A549 (cell line): ENCODE measurements at regions of chr2 and their contacts with region 1.

Region 1: GRCh38 chr2:218898109-218898878 is 17.6 kb downstream of the WNT10A start:
- DNase-seq: peak; percentile 54 to 71
- ATAC-seq: peak; percentile 67 to 86
- H3K4me3 ChIP-seq: peak overlapping the region; percentile 34
- H3K27ac ChIP-seq: peak overlapping the region in 1 of 2 experiments; percentile 52; a peak in 1 of 6 replicates
- H3K4me1 ChIP-seq: peaks cover 32% of the 10 kb centered on the region
- CTCF ChIP-seq: peak; percentile 92
- EP300 ChIP-seq: no peak
- POLR2A ChIP-seq: no peak
- RAD21 ChIP-seq: peak; percentile 79 to 86

Region 2: DNA sequence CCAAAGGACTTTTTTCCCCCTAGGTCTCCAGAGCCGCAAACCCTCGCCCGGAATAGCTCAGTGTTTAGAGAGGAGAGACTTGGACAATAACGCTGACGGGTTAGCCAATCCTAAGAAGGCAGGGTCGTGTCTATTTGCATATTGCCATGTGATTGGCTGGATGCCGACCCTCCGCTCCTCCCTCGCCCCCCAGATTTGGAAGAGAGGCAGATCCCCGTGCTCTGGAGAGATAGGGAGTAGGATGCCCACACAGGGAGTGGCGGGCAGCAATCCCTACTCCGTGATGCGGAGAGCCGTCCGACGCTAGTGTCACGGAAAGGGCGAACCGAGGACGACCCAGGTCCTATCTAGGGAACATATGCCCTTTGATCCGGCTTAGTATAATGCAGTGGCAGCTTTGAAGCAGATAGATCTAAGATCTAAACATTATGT is 37.3 kb before region 1 on chr2:
- CTCF ChIA-PET with region 1: interaction called, 14 read pairs
- POLR2A ChIA-PET with region 1: no interaction called
- DNase-seq: no peak
- ATAC-seq: peak in 1 of 2 experiments; percentile 13; a peak in 1 of 6 replicates
- H3K4me3 ChIP-seq: peak overlapping the region; percentile 64; the same call in 1 of the 3 replicates
- H3K27ac ChIP-seq: no peak overlapping the region
- H3K4me1 ChIP-seq: peaks cover 35% of the 10 kb centered on the region
- CTCF ChIP-seq: no peak
- EP300 ChIP-seq: no peak
- POLR2A ChIP-seq: no peak
- RAD21 ChIP-seq: no peak

Region 3: DNA sequence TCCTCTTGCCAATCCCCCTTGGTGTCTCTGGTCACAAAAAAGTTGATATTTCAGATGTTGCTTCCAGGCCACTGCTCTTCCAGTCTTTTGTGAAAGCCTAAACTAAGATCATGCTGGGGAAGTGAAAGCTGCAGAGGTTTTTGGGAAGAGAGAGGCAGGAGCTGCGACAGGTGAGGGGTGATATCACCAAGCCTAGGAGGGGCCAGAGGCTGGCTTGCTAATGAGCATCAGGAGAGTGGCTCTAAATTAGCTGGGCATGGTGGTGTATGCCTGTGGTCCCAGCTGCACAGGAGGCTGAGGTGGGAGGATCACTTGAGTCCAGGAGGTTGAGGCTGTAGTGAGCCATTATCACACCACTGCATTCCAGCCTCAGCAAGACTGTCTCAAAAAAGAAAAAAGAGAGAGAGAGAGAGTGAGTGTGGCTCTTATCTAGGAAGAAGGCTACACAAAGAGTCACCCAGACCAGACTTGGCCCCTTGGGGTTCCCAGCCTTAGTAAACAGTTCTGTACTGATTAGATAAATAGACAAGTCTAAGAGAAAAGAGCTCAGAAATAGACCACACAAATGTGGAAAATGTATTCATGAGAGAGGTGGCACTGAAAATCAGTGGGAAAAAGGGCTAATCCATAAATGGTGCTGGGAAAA is 46.6 kb after region 1 on chr2:
- CTCF ChIA-PET with region 1: interaction called, 13 read pairs
- POLR2A ChIA-PET with region 1: no interaction called
- DNase-seq: no peak
- ATAC-seq: no peak
- H3K4me3 ChIP-seq: no peak overlapping the region
- H3K27ac ChIP-seq: no peak overlapping the region
- H3K4me1 ChIP-seq: no peaks in the 10 kb centered on the region
- CTCF ChIP-seq: no peak
- EP300 ChIP-seq: no peak
- POLR2A ChIP-seq: no peak
- RAD21 ChIP-seq: no peak

Region 4: DNA sequence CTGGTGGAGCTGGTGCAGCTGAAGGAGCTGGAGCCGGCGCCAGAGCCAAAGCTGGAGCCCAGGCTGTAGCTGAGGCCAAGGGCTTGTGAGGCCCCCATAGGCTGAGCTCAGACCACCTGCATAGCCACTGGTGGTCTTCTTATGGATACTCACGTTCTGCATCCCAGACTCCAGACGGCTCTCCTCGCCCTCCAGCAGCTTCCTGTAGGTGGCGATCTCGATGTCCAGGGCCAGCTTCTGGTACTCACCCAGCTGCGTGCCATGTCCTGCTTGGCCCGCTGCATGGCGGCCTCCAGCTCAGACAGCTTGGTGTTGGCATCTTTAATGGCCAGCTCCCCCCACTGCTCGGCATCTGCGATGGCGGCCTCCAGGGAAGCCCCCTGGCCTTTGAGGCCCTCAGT is 55.2 kb after region 1 on chr2:
- CTCF ChIA-PET with region 1: interaction called, 25 read pairs
- POLR2A ChIA-PET with region 1: no interaction called
- DNase-seq: no peak
- ATAC-seq: peak in 1 of 2 experiments; percentile 68; a peak in 3 of 6 replicates
- H3K4me3 ChIP-seq: no peak overlapping the region
- H3K27ac ChIP-seq: no peak overlapping the region
- H3K4me1 ChIP-seq: no peaks in the 10 kb centered on the region
- CTCF ChIP-seq: no peak
- EP300 ChIP-seq: no peak
- POLR2A ChIP-seq: no peak
- RAD21 ChIP-seq: 0 out of 5 replicates have a peak, but pooled peaks of 1 of the 2 experiments have one; percentile 7

Region 5: DNA sequence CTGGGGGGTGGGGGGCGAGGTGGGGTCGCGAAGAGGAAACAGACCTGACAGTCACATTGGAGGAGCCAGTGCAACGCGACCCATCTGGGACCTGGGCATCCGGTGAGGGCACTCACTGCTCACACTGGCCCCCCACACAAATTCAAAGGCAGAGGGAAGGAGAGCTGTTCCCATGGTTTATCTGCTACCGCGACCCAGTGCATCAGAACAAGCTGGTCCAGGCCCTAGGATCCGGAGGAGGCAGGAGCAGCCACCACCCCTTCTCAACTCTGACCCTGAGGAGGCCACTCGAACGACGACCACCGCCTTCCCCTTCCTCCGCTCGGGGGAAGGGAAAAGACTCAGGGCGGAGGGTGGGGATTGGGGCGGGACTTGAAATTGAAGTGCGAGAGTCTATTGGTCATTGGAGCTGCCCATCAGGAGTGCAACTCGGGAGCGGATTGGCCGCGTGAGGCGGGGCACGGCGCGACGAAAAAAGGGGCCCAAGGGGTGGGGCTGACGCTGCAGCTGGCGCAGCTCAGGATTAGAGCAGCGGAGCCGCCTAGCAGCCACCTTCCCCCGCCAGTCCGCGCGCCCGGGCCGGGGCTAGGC is 60.9 kb after region 1 on chr2 and contains the start of gene CDK5R2:
- CTCF ChIA-PET with region 1: interaction called, 25 read pairs
- POLR2A ChIA-PET with region 1: no interaction called
- DNase-seq: peak; percentile 88 to 97
- ATAC-seq: peak; percentile 70 to 86
- H3K4me3 ChIP-seq: peak within 1 kb of the TSS; percentile 64
- H3K27ac ChIP-seq: peak within 1 kb of the TSS; percentile 73 to 74
- H3K4me1 ChIP-seq: peaks cover 35% of the 10 kb centered on the region
- CTCF ChIP-seq: no peak
- EP300 ChIP-seq: no peak
- POLR2A ChIP-seq: 0 out of 2 replicates have a peak, but pooled peaks have one; percentile 21
- RAD21 ChIP-seq: no peak
- polyA plus RNA-seq, gene CDK5R2: 0.77 and 0.94 TPM in 2 replicates

Region 6: DNA sequence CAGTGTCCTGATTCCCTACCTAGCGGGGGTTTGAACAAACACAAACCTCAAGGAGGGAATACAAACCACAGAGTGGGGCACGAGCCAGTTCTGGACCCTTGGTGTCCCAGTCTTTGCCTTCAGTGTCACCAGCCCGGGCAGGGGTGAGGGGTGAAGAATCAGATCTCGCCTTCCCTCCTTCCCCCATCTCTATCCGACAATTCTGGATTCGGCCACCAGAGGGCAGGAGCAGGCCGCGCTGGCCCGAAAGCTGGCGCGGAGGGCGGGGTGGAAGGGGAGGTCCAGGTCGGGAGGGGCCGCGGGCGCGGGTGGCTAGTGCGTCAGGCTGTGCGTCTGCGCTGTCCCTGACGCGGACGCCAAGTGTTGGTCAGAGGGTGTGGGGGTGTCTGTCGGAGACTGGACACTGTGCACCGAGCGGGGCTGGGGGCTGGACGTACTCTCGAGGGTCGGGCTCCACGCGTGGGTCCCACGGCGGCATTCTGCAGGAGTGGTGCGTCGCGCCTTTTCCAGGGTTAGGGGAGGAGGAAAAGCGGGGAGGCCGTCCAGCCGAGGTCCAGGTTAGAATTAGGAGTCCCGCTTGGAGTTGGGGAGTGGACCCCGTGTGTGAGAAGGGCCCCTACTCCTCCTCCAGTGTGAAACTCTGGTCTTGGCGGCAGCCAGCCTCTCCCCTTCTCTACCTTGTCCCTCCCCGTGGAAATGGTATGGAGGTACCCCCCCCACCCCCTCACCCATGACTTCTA is 97.8 kb after region 1 on chr2:
- CTCF ChIA-PET with region 1: interaction called, 16 read pairs
- POLR2A ChIA-PET with region 1: no interaction called
- DNase-seq: peak; percentile 87
- ATAC-seq: peak; percentile 78 to 93
- H3K4me3 ChIP-seq: peak overlapping the region; percentile 49
- H3K27ac ChIP-seq: peak overlapping the region; percentile 79 to 84
- H3K4me1 ChIP-seq: peaks cover 10% of the 10 kb centered on the region
- CTCF ChIP-seq: peak; percentile 87
- EP300 ChIP-seq: no peak
- POLR2A ChIP-seq: peak; percentile 84
- RAD21 ChIP-seq: peak; percentile 74 to 80

Region 7: GRCh38 chr2:219002395-219003266 is 104.3 kb after region 1 on chr2:
- CTCF ChIA-PET with region 1: interaction called, 14 read pairs
- POLR2A ChIA-PET with region 1: no interaction called
- DNase-seq: peak; percentile 82 to 93
- ATAC-seq: peak; percentile 84 to 93
- H3K4me3 ChIP-seq: peak overlapping the region; percentile 59
- H3K27ac ChIP-seq: peak overlapping the region; percentile 64 to 83
- H3K4me1 ChIP-seq: peaks cover 7% of the 10 kb centered on the region
- CTCF ChIP-seq: peak; percentile 68
- EP300 ChIP-seq: no peak
- POLR2A ChIP-seq: peak; percentile 52
- RAD21 ChIP-seq: 0 out of 5 replicates have a peak, but pooled peaks have one; percentile 17 to 19